Transverse colon (tissue), 4 donors: ENCODE measurements at regions of chr20 and their contacts with region 1.

Region 1: GRCh38 chr20:34302723-34303528 is at the start of gene AHCY:
- DNase-seq: peak; percentile 98
- H3K4me3 ChIP-seq: peak within 1 kb of the TSS; percentile 70 to 89 (median 80)
- H3K27ac ChIP-seq: peak within 1 kb of the TSS; percentile 92 to 98 (median 96)
- H3K4me1 ChIP-seq: peaks cover 13 to 25% (median 15%) of the 10 kb centered on the region in 4 donors
- H3K27me3 ChIP-seq: no peaks in the 10 kb centered on the region
- CTCF ChIP-seq: peak in 1 of 5 experiments; percentile 15
- EP300 ChIP-seq: no peak
- POLR2A ChIP-seq: peak; percentile 72
- total RNA-seq, gene AHCY: 23.9 to 71.6 (median 63.8) TPM

Region 2: GRCh38 chr20:34473262-34473883 is 170.4 kb after region 1 on chr20:
- in situ Hi-C with region 1: loop called in 1 of 4 experiments (anchors 25 kb)
- intact Hi-C with region 1: no loop called
- DNase-seq: peak; percentile 45
- H3K4me3 ChIP-seq: no peak overlapping the region
- H3K27ac ChIP-seq: no peak overlapping the region
- H3K4me1 ChIP-seq: peaks cover 0 to 10% (median 3%) of the 10 kb centered on the region in 4 donors
- H3K27me3 ChIP-seq: no peaks in the 10 kb centered on the region
- CTCF ChIP-seq: peak in 3 of 5 experiments; percentile 12 to 21 (median 17)
- EP300 ChIP-seq: no peak
- POLR2A ChIP-seq: no peak

Region 3: DNA sequence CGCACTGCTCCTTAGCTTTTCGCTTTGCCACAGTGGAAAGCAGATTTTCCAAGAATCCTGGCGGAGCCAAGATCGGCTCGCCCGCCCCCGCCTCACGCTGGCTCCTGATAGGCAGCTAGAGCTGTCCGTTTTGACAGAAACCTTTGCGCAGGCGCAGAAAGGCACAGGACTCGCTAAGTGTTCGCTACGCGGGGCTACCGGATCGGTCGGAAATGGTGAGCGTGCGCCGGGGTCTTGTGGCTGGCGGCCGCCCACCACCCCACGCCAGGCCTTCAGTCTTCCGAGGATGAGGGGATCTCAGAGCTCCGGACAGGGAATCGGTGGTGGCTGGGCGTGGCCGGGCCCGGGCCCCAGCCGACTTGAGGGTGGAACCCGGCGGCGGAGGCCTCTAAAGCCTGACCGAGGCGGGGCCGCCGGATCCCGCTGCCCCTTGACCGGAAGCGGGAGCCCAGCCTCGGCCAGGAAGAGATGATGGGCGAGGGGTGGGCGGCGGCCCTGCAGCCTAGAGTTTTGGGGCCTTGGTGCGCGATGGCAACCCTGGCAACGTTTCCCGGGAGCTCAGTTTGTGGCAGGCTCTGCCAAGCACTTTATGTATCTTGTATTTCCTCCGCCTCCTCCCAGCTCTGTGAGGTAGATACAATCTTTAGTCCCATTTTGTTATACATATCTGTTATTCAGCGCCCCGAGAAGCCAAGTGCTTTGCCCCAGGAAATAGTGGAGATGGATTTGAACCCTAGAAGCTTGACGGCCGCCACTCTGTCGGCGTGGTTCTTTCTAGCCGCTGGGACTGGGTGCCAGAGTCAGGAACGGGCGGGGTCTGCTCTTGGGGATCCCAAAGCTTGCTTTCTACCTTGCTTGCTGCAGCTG is 213.6 kb after region 1 on chr20 and contains the start of gene DYNLRB1:
- in situ Hi-C with region 1: loop called in 2 of 4 experiments (anchors 25 kb)
- intact Hi-C with region 1: no loop called
- DNase-seq: peak; percentile 98
- H3K4me3 ChIP-seq: peak within 1 kb of the TSS; percentile 36 to 79 (median 65)
- H3K27ac ChIP-seq: peak within 1 kb of the TSS; percentile 92 to 95 (median 94)
- H3K4me1 ChIP-seq: peaks cover 6 to 45% (median 24%) of the 10 kb centered on the region in 4 donors
- H3K27me3 ChIP-seq: no peaks in the 10 kb centered on the region
- CTCF ChIP-seq: no peak
- EP300 ChIP-seq: no peak
- POLR2A ChIP-seq: peak; percentile 90
- total RNA-seq, gene DYNLRB1: 80.8 to 178 (median 120) TPM

Region 4: GRCh38 chr20:34704177-34705007 is 401.5 kb after region 1 on chr20 and contains the start of gene TP53INP2:
- in situ Hi-C with region 1: loop called in 1 of 4 experiments (anchors 25 kb)
- intact Hi-C with region 1: no loop called
- DNase-seq: peak; percentile 96
- H3K4me3 ChIP-seq: peak within 1 kb of the TSS; percentile 69 to 97 (median 78)
- H3K27ac ChIP-seq: peak within 1 kb of the TSS; percentile 98 to 100 (median 100)
- H3K4me1 ChIP-seq: peaks cover 16 to 47% (median 38%) of the 10 kb centered on the region in 4 donors
- H3K27me3 ChIP-seq: no peaks in the 10 kb centered on the region
- CTCF ChIP-seq: no peak
- EP300 ChIP-seq: no peak
- POLR2A ChIP-seq: peak; percentile 53
- total RNA-seq, gene TP53INP2: 12.9 to 80.8 (median 57.9) TPM

Region 5: DNA sequence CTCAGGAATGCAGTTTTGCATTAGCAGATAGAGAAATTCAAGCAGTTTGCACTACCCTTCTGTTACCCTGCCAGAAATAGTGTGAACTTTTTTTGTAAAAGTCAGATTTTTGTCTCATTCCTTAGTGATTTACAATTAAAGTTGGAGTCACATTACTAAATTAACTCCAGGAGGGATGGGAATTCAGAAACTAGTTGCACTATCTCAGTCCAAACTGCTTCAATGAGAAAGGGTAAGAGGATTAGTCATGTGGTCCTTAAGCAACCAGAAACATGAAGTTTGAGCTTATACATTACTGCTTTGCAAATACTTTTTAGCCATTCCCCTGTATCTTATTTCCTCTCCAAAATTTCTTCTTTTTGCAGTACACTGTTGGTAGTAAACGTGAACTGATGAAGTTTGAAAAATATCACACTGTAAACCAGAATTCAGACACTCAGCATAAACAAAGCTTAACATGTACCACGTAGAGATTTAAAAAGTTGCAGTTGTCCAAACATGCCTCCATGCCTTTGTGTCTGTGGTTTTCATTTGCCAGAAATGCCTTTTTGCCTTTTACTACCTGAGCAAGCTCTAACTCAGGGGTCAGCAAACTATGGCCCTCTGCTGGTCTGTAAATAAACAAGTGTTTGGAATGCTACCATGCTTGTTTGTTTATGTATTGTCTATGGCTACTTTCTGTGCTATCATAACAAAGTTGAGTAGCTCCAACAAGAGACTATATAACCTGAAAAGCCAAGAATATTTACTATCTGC is 451.0 kb after region 1 on chr20:
- in situ Hi-C with region 1: loop called in 2 of 4 experiments (anchors 25 kb)
- intact Hi-C with region 1: no loop called
- DNase-seq: no peak
- H3K4me3 ChIP-seq: no peak overlapping the region
- H3K27ac ChIP-seq: no peak overlapping the region
- H3K4me1 ChIP-seq: no peaks in the 10 kb centered on the region
- H3K27me3 ChIP-seq: no peaks in the 10 kb centered on the region
- CTCF ChIP-seq: no peak
- EP300 ChIP-seq: no peak
- POLR2A ChIP-seq: no peak